AG04449 (cell line): ENCODE measurements at regions of chr4 and their contacts with region 1.

Region 1: GRCh38 chr4:41661442-41662076 is 87.0 kb downstream of the PHOX2B start:
- DNase-seq: no peak
- H3K4me3 ChIP-seq: no peak overlapping the region
- CTCF ChIP-seq: peak; percentile 83

Region 2: GRCh38 chr4:41287050-41287449 is 374.5 kb before region 1 on chr4:
- CTCF ChIA-PET with region 1: interaction called, 256 read pairs
- POLR2A ChIA-PET with region 1: no interaction called
- DNase-seq: no peak
- H3K4me3 ChIP-seq: no peak overlapping the region
- CTCF ChIP-seq: no peak

Region 3: DNA sequence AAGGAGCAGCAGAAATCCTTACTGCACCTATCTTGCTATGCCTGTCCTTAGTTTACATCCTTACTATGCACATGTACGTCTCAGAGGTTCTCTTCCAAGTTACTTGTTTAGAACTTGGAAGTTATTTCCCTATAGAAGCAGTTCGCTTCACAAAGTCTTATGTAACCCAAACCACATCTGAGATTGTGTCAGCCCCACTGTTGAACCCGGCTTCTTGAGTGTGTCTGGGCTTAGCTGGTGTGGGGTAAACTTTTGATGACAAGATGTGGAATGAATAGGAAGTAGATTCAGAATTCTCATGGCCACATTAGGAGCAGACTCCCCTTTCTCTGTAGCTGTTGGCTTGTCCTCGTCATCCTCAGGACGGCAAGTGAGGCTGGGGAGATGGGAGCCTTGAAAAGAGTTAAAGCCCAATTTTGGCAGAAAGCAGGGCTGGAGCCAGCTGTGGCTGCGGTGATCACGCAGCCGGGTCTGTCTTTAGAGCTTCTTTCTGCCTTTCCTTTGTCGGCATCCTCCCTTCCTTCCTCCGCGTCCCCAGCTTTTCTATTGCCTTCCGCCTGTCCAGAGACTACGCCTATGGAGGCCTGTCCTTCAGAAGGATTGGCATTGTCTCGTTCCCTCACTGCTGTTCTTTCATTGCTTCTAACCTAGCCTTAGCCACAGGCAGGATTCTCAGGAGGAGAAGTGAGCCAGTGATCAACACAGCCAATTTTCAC is 146.6 kb before region 1 on chr4:
- CTCF ChIA-PET with region 1: no interaction called
- POLR2A ChIA-PET with region 1: no interaction called
- DNase-seq: no peak
- H3K4me3 ChIP-seq: no peak overlapping the region
- CTCF ChIP-seq: no peak

Region 4: GRCh38 chr4:41644288-41644914 is 17.2 kb before region 1 on chr4:
- CTCF ChIA-PET with region 1: interaction called, 11 read pairs
- POLR2A ChIA-PET with region 1: no interaction called
- DNase-seq: no peak
- H3K4me3 ChIP-seq: no peak overlapping the region
- CTCF ChIP-seq: peak; percentile 82

Region 5: DNA sequence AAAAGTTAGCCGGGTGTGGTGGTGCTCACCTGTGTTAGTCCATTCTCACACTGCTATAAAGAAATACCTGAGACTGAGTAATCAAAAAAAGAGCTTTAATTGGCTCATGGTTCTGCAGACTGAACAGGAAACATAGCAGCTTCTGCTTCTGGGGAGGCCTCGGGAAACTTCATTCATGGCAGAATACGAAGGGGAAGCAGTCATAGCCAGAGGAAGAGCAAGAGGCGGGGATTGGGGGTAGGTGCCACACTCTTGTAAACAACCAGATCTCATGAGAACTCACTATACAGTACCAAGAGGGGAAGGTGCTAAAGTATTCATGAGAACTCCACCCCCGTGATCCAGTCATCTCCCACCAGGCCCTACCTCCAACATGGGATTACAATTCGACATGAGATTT is 426.8 kb after region 1 on chr4:
- CTCF ChIA-PET with region 1: no interaction called
- POLR2A ChIA-PET with region 1: no interaction called
- DNase-seq: no peak
- H3K4me3 ChIP-seq: no peak overlapping the region
- CTCF ChIP-seq: no peak